ENCODE measurements at regions of chr5 and their contacts with region 1.

Region 1: GRCh38 chr5:76715736-76716455 is at the start of gene F2R:
- DNase-seq: no peak
- H3K4me3 Mint-ChIP-seq: peak within 1 kb of the TSS; percentile 85
- H3K27ac Mint-ChIP-seq: peak within 1 kb of the TSS; percentile 34
- H3K4me1 Mint-ChIP-seq: peaks cover 39% of the 10 kb centered on the region
- H3K27me3 Mint-ChIP-seq: peaks cover 19% of the 10 kb centered on the region
- total RNA-seq, gene F2R: 3.9 and 4.0 TPM in 2 replicates

Region 2: DNA sequence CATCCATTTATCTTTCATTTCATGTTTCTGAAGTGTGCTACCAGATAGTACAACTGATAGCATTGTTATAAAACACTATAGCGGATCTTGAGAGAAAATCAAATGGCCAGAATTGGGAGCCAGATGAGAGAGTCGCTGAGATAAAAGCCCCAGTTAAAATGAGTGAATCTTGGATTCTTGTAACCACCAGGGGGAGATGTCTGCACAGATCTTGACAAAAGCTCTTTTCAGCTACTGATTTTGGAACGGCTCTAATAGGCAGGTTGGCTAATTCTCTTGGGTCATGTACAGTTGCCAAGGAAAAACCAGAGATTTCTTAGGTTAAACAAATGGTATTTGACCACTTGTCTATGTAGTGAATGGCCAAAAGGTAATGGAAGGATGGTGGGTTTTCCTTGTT is 114.4 kb before region 1 on chr5:
- intact Hi-C with region 1: loop called (anchors 5 kb)
- DNase-seq: no peak
- H3K4me3 Mint-ChIP-seq: no peak overlapping the region
- H3K27ac Mint-ChIP-seq: no peak overlapping the region
- H3K4me1 Mint-ChIP-seq: peaks cover 25% of the 10 kb centered on the region
- H3K27me3 Mint-ChIP-seq: no peaks in the 10 kb centered on the region

Region 3: DNA sequence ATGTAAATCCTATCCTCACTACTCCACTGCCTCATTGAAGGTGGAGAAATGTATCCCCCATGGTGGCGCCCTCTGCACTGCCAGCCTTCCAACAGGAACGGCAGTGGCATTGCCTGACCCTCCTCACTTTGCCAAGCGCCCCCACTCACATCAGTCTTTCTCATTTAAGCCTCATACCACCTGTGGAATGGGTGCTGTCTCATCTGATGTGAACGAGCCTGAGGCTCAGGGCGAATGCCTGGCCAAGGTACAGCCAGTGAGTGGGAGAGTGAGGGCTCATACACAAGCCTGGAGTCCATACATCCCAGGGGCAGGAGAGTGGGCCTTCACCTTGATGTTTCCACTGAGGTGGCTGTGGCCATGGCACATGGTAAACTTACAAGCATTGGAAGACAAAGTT is 103.0 kb before region 1 on chr5:
- intact Hi-C with region 1: no loop called
- DNase-seq: no peak
- H3K4me3 Mint-ChIP-seq: no peak overlapping the region
- H3K27ac Mint-ChIP-seq: no peak overlapping the region
- H3K4me1 Mint-ChIP-seq: peaks cover 10% of the 10 kb centered on the region
- H3K27me3 Mint-ChIP-seq: no peaks in the 10 kb centered on the region

Region 4: GRCh38 chr5:76691467-76692138 is 24.3 kb before region 1 on chr5:
- intact Hi-C with region 1: loop called (anchors 2 kb)
- DNase-seq: no peak
- H3K4me3 Mint-ChIP-seq: no peak overlapping the region
- H3K27ac Mint-ChIP-seq: peak overlapping the region; percentile 78
- H3K4me1 Mint-ChIP-seq: peaks cover 45% of the 10 kb centered on the region
- H3K27me3 Mint-ChIP-seq: no peaks in the 10 kb centered on the region

Region 5: GRCh38 chr5:76736679-76737556 is 21.0 kb after region 1 on chr5:
- intact Hi-C with region 1: loop called (anchors 1 kb)
- DNase-seq: no peak
- H3K4me3 Mint-ChIP-seq: no peak overlapping the region
- H3K27ac Mint-ChIP-seq: peak overlapping the region; percentile 57
- H3K4me1 Mint-ChIP-seq: peaks cover 63% of the 10 kb centered on the region
- H3K27me3 Mint-ChIP-seq: no peaks in the 10 kb centered on the region

Measured in activated T-helper 1 cell treated with anti-CD3 and anti-CD28 coated beads, Interleukin-12 subunit alpha, Interleukin-12 subunit beta, Interleukin-2, Interleukin-4 antibody, amounts not matched to agents 30 ng/mL and 10 ng/mL and 1 ng/mL, durations not matched to agents 14 hours and 24 hours and 36 hours (primary cell).